Right ventricle myocardium superior (tissue), 1 donor: ENCODE measurements at regions of chr9 and their contacts with region 1.

Region 1: GRCh38 chr9:12719431-12719830 is 26.2 kb downstream of the TYRP1 start:
- DNase-seq: no peak
- ATAC-seq: peak; percentile 71

Region 2: DNA sequence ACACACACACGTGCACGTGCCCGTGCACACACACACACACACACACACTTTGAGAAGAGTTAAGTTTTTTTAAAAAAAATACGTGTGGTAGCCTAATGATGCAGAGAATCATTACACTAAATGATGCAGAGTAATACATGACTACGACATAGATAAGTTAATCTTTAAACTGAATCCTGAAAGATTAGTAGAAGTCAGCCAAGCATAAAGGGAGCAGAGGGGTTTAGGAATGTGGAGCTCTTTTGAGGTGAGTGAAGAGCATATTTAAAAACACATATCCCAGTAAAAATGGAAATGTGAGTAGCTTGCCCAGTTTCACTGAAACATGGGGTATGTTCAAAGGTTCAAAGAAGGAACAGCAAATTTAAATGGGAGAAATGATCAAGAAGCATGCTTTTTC is 87.6 kb before region 1 on chr9:
- intact Hi-C with region 1: no loop called
- DNase-seq: no peak
- ATAC-seq: no peak

Region 3: GRCh38 chr9:13088720-13089427 is 369.4 kb after region 1 on chr9:
- intact Hi-C with region 1: loop called (anchors 5 kb)
- DNase-seq: no peak
- ATAC-seq: peak; percentile 76

Region 4: DNA sequence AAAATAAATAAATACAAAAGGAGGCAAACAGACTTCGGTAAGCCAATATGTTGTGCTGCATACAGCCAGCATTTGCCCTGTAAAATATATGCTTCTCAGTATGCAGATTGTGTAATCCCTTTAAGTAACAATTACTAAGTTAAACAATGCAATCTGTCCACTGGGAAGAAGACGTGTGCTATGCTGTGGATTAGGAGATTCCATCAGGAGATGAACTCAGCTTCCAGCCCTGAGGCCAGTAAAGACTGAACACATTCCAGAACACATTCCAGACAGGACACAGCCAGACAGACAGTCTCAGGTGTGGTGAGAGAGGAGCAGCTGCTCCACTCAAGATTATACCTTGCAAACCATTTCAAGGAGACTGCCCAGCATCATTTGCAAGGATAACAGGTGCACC is 462.2 kb after region 1 on chr9:
- intact Hi-C with region 1: no loop called
- DNase-seq: no peak
- ATAC-seq: no peak